ENCODE measurements at regions of chr9 and their contacts with region 1.

Region 1: DNA sequence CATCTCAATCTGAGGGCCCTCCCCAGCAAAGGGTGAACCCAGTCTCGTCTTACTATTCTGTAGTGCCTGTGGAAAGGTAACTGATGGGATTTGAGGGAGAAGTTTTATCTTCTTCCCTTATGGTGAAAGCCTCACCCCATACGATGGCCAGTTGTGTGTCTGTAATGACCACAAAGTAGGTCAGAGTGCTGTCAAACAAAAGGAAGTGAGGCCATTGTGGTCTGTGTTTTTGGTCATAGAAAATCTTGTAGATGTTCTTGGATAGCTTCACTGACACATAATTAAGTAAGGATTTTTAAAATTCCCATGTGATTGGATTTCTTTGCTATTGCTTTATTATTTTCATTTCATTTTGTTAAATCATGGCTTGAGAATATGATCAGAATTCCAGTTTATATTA is 505.1 kb upstream of the KLF4 start:
- DNase-seq: peak; percentile 25 to 27 (median 26)
- H3K4me3 ChIP-seq: no peak overlapping the region
- H3K4me3 Mint-ChIP-seq: no peak overlapping the region
- H3K27ac ChIP-seq: peak overlapping the region in 1 of 2 donors; percentile 53
- H3K27ac Mint-ChIP-seq: peak overlapping the region in 6 of 7 donors; percentile 51 to 84 (median 75)
- H3K4me1 ChIP-seq: peaks cover 48 to 55% of the 10 kb centered on the region in 2 donors
- H3K4me1 Mint-ChIP-seq: peaks cover 48% of the 10 kb centered on the region
- H3K27me3 ChIP-seq: no peaks in the 10 kb centered on the region
- H3K27me3 Mint-ChIP-seq: peaks cover 1 to 5% (median 4%) of the 10 kb centered on the region in 3 donors
- CTCF ChIP-seq: no peak

Region 2: DNA sequence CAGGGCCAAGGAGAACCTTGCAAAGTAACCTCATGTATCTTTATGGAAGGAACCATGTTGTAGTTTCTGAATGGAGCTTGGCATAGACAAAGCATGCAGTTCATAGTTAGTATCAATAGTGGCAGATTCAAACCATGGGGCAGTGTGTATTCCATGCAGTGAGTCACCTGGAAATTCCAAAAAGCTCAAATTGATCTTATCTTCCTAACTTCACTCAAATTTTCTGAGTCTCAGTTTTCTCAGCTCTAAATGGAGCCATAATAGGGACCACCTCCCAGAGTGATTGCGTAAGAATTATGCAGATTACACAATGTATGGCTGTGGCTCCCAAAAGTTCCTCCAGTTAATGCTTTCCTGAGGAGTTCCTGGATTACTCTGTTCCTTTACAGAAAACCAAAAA is 44.8 kb after region 1 on chr9:
- intact Hi-C with region 1: loop called in 1 of 2 experiments (anchors 5 kb)
- DNase-seq: peak in 1 of 3 donors; percentile 47
- H3K4me3 ChIP-seq: no peak overlapping the region
- H3K4me3 Mint-ChIP-seq: no peak overlapping the region
- H3K27ac ChIP-seq: no peak overlapping the region
- H3K27ac Mint-ChIP-seq: no peak overlapping the region
- H3K4me1 ChIP-seq: peaks cover 3 to 5% of the 10 kb centered on the region in 2 donors
- H3K4me1 Mint-ChIP-seq: peaks cover 24% of the 10 kb centered on the region
- H3K27me3 ChIP-seq: no peaks in the 10 kb centered on the region
- H3K27me3 Mint-ChIP-seq: peaks cover 3 to 5% (median 3%) of the 10 kb centered on the region in 3 donors
- CTCF ChIP-seq: no peak

Measured in CD14-positive monocyte (primary cell).